Activated B cell treated with CpG ODN at 0.5 μM for 24 hours (primary cell): ENCODE measurements at regions of chr10 and their contacts with region 1.

Region 1: DNA sequence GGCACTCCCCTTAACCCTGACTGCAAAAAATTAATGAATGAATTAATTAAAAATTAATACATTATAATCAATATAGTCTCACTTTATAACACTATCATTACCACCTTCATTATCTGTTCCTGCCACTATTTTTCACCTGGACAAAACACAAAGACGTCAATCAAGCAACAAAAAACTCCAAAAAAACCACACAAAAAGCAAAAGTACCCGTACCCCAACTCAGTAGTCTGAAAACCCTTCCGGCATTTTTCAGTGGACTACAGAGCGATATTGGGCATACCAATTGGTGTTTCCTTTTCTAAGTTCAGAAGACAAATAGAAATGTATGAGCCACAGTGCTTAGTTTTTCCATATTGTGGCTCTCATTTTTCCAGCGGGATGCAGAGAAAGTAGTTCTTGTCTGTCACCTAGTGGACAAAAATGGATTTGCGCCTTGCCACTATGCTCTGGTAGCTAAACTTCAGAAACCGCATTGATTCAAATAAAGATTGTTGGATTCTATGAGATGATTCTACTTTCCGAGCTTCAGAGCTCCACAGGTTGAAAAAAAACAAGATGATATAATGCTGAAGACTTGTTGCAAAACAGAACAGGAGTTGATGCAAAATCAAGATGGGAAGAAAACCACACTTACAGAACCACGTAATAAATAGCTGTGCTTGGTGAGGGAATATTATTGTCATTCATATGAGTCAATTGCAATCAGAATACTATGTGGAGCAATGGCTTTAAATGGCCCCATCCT is 50.6 kb upstream of the ITGB1 start:
- DNase-seq: no peak
- ATAC-seq: peak; percentile 33
- H3K4me3 Mint-ChIP-seq: peak overlapping the region; percentile 67
- H3K27ac Mint-ChIP-seq: no peak overlapping the region
- H3K4me1 Mint-ChIP-seq: peaks cover 41% of the 10 kb centered on the region
- H3K27me3 Mint-ChIP-seq: peaks cover 6% of the 10 kb centered on the region
- CTCF ChIP-seq: peak; percentile 85

Region 2: GRCh38 chr10:31836569-31837406 is 1171.9 kb before region 1 on chr10:
- CTCF ChIA-PET with region 1: no interaction called
- POLR2A ChIA-PET with region 1: no interaction called
- intact Hi-C with region 1: loop called (anchors 2 kb)
- DNase-seq: no peak
- ATAC-seq: peak; percentile 62
- H3K4me3 Mint-ChIP-seq: no peak overlapping the region
- H3K27ac Mint-ChIP-seq: no peak overlapping the region
- H3K4me1 Mint-ChIP-seq: peaks cover 8% of the 10 kb centered on the region
- H3K27me3 Mint-ChIP-seq: no peaks in the 10 kb centered on the region
- CTCF ChIP-seq: no peak

Region 3: DNA sequence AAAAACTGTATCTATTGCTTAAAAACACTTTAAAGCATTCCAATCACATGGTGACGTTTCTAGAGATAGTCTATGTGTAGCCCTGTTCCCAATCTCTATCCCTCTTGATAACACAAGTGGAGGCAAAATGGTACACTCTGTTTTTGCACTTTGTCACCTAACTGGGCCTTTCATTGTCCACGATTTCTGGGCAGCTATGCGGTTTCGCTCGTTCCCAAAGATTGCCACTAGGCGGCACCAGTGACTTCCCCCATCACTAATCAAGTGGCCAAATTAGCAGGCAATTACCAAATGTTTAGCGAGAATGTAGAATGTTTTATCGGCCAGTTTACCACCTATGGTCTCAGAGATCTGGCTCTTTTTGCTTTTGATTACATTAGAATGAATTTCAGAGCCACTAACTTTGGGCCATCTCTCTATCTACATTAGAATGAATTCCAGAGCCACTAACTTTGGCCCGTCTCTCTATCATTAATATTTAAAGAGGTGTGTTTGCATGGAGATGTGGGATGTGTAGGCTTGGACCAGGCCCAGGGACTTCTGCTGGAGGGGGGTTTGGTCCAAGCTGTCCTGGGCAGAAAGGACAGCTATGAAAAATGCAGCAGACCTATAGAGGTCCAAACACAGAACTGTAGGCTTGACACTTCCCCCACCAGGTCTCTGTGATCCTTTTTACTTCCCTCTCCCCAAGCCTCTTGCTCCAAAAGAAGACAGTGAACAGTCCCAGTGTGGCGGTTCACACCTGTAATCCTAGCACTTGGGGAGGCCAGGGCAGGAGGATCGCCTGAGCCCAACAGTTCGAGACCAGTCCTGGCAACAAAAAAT is 751.8 kb before region 1 on chr10:
- CTCF ChIA-PET with region 1: no interaction called
- POLR2A ChIA-PET with region 1: no interaction called
- intact Hi-C with region 1: loop called (anchors 2 kb)
- DNase-seq: peak; percentile 52
- ATAC-seq: peak; percentile 88
- H3K4me3 Mint-ChIP-seq: no peak overlapping the region
- H3K27ac Mint-ChIP-seq: no peak overlapping the region
- H3K4me1 Mint-ChIP-seq: peaks cover 6% of the 10 kb centered on the region
- H3K27me3 Mint-ChIP-seq: no peaks in the 10 kb centered on the region
- CTCF ChIP-seq: peak; percentile 20

Region 4: DNA sequence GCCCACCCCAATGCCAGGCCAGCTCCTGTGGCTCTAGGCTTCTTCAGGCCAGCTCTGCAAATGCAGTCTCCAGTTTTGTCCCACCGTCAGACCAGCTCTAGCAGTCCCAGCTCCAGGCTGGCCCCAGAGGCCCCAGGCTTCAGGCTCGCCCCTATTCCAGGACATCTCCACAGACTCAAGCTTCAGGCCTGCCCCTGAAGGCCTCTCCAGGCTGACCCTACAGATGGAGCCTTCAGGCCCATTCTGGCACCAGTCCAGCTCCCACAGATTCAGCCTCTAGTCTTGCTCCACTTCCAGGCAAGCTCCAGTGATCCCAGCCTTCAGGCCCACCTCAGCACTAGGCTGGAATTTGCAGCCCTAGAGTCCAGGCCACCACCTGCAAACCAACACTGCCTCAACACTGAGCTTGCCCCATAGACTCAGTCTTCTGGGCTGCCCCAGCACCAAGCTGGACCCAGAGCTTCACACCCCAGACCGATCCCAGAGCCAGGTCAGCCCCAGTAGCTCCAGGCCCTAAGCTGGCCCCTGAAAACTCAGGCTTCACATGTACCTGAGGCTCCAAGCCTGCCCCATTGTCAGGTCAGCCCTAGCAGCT is 220.9 kb before region 1 on chr10:
- CTCF ChIA-PET with region 1: interaction called, 14 read pairs
- POLR2A ChIA-PET with region 1: no interaction called
- intact Hi-C with region 1: no loop called
- DNase-seq: no peak
- ATAC-seq: no peak
- H3K4me3 Mint-ChIP-seq: no peak overlapping the region
- H3K27ac Mint-ChIP-seq: no peak overlapping the region
- H3K4me1 Mint-ChIP-seq: no peaks in the 10 kb centered on the region
- H3K27me3 Mint-ChIP-seq: no peaks in the 10 kb centered on the region
- CTCF ChIP-seq: no peak

Region 5: GRCh38 chr10:32958085-32959005 is 50.3 kb before region 1 on chr10 and contains the start of gene ITGB1:
- CTCF ChIA-PET with region 1: interaction called, 5 read pairs
- POLR2A ChIA-PET with region 1: no interaction called
- intact Hi-C with region 1: loop called (anchors 2 kb)
- DNase-seq: peak; percentile 85
- ATAC-seq: peak; percentile 83
- H3K4me3 Mint-ChIP-seq: peak within 1 kb of the TSS; percentile 86
- H3K27ac Mint-ChIP-seq: peak within 1 kb of the TSS; percentile 95
- H3K4me1 Mint-ChIP-seq: peaks cover 72% of the 10 kb centered on the region
- H3K27me3 Mint-ChIP-seq: no peaks in the 10 kb centered on the region
- CTCF ChIP-seq: no peak
- total RNA-seq, gene ITGB1: 80.3 and 87.4 TPM in 2 replicates

Region 6: GRCh38 chr10:33134011-33134751 is 125.5 kb after region 1 on chr10:
- CTCF ChIA-PET with region 1: interaction called, 7 read pairs
- POLR2A ChIA-PET with region 1: interaction called, 3 read pairs
- intact Hi-C with region 1: loop called (anchors 1 kb)
- DNase-seq: peak; percentile 21
- ATAC-seq: peak; percentile 84
- H3K4me3 Mint-ChIP-seq: no peak overlapping the region
- H3K27ac Mint-ChIP-seq: peak overlapping the region; percentile 57
- H3K4me1 Mint-ChIP-seq: peaks cover 40% of the 10 kb centered on the region
- H3K27me3 Mint-ChIP-seq: no peaks in the 10 kb centered on the region
- CTCF ChIP-seq: no peak